CD4-positive, alpha-beta memory T cell (primary cell): ENCODE measurements at regions of chr15 and their contacts with region 1.

Region 1: GRCh38 chr15:35740761-35741160 is 194.8 kb upstream of the DPH6 start:
- DNase-seq: no peak
- H3K4me3 ChIP-seq: no peak overlapping the region
- H3K4me3 Mint-ChIP-seq: no peak overlapping the region
- H3K27ac ChIP-seq: no peak overlapping the region
- H3K27ac Mint-ChIP-seq: no peak overlapping the region
- H3K4me1 ChIP-seq: no peaks in the 10 kb centered on the region
- H3K4me1 Mint-ChIP-seq: no peaks in the 10 kb centered on the region
- H3K27me3 ChIP-seq: no peaks in the 10 kb centered on the region
- H3K27me3 Mint-ChIP-seq: peaks cover 4 to 6% of the 10 kb centered on the region in 2 donors

Region 2: DNA sequence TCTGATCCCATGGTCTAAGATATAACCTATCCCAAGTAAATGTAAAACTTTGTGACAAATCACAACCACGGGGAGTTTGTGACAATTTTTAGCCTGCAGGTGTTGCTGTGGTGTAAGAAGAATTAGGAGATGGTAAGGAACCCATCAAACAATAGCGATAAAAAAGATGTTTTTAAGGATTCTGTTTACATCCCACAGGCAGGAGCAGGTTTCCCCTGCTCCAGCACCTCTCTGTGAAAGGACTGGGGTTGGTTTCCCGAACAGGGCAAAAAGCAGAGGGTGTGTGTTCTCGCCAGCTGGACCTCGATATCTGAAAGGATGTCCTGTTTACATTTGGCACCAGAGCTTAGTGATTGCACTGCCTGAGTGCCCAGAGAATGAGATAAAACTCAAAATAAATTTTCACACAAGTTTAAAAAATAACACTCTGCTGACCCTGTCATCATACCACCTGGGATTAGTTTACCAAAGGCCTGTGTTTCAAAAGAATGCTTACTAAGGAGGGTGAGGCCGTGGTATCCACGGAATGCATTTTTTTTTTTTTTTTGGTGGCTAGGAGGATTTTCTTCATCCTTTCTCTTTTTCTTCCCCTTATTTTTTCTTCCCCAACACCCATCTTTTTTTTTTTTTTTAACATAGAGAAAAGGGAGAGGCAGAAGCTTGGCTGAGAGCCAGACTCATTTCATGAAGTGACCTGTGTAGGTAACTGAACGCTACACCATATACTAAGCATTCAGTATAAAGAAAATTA is 43.0 kb before region 1 on chr15:
- CTCF ChIA-PET with region 1: no interaction called
- POLR2A ChIA-PET with region 1: no interaction called
- intact Hi-C with region 1: no loop called
- DNase-seq: no peak
- H3K4me3 ChIP-seq: no peak overlapping the region
- H3K4me3 Mint-ChIP-seq: no peak overlapping the region
- H3K27ac ChIP-seq: no peak overlapping the region
- H3K27ac Mint-ChIP-seq: no peak overlapping the region
- H3K4me1 ChIP-seq: no peaks in the 10 kb centered on the region
- H3K4me1 Mint-ChIP-seq: no peaks in the 10 kb centered on the region
- H3K27me3 ChIP-seq: no peaks in the 10 kb centered on the region
- H3K27me3 Mint-ChIP-seq: peaks cover 3% of the 10 kb centered on the region in 2 donors

Region 3: GRCh38 chr15:35751413-35752133 is 10.8 kb after region 1 on chr15:
- CTCF ChIA-PET with region 1: interaction called, 18 read pairs
- POLR2A ChIA-PET with region 1: no interaction called
- intact Hi-C with region 1: no loop called
- DNase-seq: peak; percentile 2 to 38 (median 9)
- H3K4me3 ChIP-seq: no peak overlapping the region
- H3K4me3 Mint-ChIP-seq: no peak overlapping the region
- H3K27ac ChIP-seq: no peak overlapping the region
- H3K27ac Mint-ChIP-seq: no peak overlapping the region
- H3K4me1 ChIP-seq: no peaks in the 10 kb centered on the region
- H3K4me1 Mint-ChIP-seq: peaks cover 0 to 2% (median 0%) of the 10 kb centered on the region in 4 donors
- H3K27me3 ChIP-seq: no peaks in the 10 kb centered on the region
- H3K27me3 Mint-ChIP-seq: peaks cover 0 to 5% of the 10 kb centered on the region in 2 donors